MCF 10A (cell line): ENCODE measurements at regions of chr4 and their contacts with region 1.

Region 1: GRCh38 chr4:151362404-151363164 is 37.2 kb upstream of the SH3D19 start:
- DNase-seq: peak; percentile 89
- H3K4me3 Mint-ChIP-seq: no peak overlapping the region
- H3K27ac Mint-ChIP-seq: no peak overlapping the region
- H3K4me1 Mint-ChIP-seq: no peaks in the 10 kb centered on the region
- H3K27me3 Mint-ChIP-seq: no peaks in the 10 kb centered on the region
- CTCF ChIP-seq: peak; percentile 93

Region 2: DNA sequence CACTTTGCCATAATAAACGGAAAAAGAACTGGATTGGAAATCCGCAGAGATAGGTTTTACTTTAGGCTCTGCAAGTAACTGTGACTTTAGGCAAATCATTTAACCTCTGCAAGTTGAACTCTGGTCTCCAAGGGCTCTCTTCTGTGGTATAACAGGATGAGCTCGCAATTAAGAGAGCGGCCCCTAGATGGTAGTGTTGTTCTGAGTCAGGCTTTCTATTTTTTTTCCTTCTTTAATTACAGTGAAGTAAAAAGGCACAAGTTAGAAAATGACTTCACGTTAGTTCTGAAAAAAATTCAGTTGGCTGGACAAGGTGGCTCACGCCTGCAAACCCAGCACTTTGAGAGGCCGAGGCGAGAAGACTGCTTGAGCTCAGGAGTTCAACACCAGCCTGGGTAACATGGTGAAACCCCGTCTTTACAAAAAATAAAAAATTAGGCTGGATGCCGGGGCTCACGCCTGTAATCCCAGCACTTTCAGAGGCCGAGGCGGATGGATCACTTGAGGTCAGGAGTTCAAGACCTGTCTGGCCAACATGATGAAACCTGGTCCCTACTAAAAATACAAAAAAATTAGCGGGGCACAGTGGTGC is 245.1 kb before region 1 on chr4:
- CTCF ChIA-PET with region 1: interaction called, 6 read pairs
- POLR2A ChIA-PET with region 1: no interaction called
- intact Hi-C with region 1: loop called (anchors 1 kb)
- DNase-seq: peak; percentile 68
- H3K4me3 Mint-ChIP-seq: no peak overlapping the region
- H3K27ac Mint-ChIP-seq: no peak overlapping the region
- H3K4me1 Mint-ChIP-seq: no peaks in the 10 kb centered on the region
- H3K27me3 Mint-ChIP-seq: no peaks in the 10 kb centered on the region
- CTCF ChIP-seq: peak; percentile 78

Region 3: GRCh38 chr4:151418385-151418784 is 55.8 kb after region 1 on chr4:
- CTCF ChIA-PET with region 1: no interaction called
- POLR2A ChIA-PET with region 1: no interaction called
- intact Hi-C with region 1: loop called (anchors 5 kb)
- DNase-seq: peak; percentile 86
- H3K4me3 Mint-ChIP-seq: no peak overlapping the region
- H3K27ac Mint-ChIP-seq: peak overlapping the region; percentile 89
- H3K4me1 Mint-ChIP-seq: peaks cover 43% of the 10 kb centered on the region
- H3K27me3 Mint-ChIP-seq: no peaks in the 10 kb centered on the region
- CTCF ChIP-seq: no peak

Region 4: GRCh38 chr4:151604238-151604637 is 241.7 kb after region 1 on chr4:
- CTCF ChIA-PET with region 1: interaction called, 5 read pairs
- POLR2A ChIA-PET with region 1: interaction called, 4 read pairs
- intact Hi-C with region 1: loop called (anchors 1 kb)
- DNase-seq: peak; percentile 29
- H3K4me3 Mint-ChIP-seq: no peak overlapping the region
- H3K27ac Mint-ChIP-seq: no peak overlapping the region
- H3K4me1 Mint-ChIP-seq: no peaks in the 10 kb centered on the region
- H3K27me3 Mint-ChIP-seq: no peaks in the 10 kb centered on the region
- CTCF ChIP-seq: peak; percentile 58

Region 5: DNA sequence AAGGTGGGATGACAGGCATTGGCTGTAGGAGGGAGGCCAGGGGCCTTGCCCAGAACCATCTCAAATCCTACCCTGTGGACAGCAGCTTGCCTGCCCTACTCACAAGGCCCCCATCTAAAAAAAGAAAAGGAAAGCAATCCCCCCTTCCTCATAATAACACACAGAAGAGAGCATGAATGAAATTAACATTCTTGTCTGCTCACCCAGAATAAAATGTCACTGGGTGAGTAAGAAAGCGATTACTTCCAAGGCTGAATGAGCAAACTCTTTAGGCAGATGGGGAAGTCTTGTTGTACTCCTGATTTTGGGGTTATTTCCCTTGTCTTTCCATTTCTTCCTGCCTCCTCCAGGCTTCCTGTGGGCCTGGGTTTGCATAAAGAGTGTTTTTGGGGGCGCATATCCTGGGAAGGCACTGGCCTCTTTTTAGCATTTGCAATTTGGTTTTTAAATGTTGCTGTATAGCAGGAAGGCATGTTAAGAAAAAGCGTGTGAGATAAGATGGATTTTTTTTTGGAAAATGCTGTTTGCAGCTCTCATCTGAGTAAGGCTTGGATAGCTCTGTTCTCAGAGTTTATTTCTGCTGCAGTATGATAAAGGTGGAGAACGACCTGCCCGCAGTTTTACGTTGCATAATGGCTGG is 646.6 kb after region 1 on chr4:
- CTCF ChIA-PET with region 1: no interaction called
- POLR2A ChIA-PET with region 1: no interaction called
- intact Hi-C with region 1: no loop called
- DNase-seq: no peak
- H3K4me3 Mint-ChIP-seq: no peak overlapping the region
- H3K27ac Mint-ChIP-seq: no peak overlapping the region
- H3K4me1 Mint-ChIP-seq: no peaks in the 10 kb centered on the region
- H3K27me3 Mint-ChIP-seq: peaks cover 31% of the 10 kb centered on the region
- CTCF ChIP-seq: no peak

Region 6: GRCh38 chr4:152385551-152385950 is 1023.0 kb after region 1 on chr4:
- CTCF ChIA-PET with region 1: no interaction called
- POLR2A ChIA-PET with region 1: no interaction called
- intact Hi-C with region 1: loop called (anchors 1 kb)
- DNase-seq: peak; percentile 18
- H3K4me3 Mint-ChIP-seq: no peak overlapping the region
- H3K27ac Mint-ChIP-seq: peak overlapping the region; percentile 9
- H3K4me1 Mint-ChIP-seq: peaks cover 10% of the 10 kb centered on the region
- H3K27me3 Mint-ChIP-seq: no peaks in the 10 kb centered on the region
- CTCF ChIP-seq: peak; percentile 48